Astrocyte of the cerebellum (primary cell): ENCODE measurements at regions of chr3 and their contacts with region 1.

Region 1: DNA sequence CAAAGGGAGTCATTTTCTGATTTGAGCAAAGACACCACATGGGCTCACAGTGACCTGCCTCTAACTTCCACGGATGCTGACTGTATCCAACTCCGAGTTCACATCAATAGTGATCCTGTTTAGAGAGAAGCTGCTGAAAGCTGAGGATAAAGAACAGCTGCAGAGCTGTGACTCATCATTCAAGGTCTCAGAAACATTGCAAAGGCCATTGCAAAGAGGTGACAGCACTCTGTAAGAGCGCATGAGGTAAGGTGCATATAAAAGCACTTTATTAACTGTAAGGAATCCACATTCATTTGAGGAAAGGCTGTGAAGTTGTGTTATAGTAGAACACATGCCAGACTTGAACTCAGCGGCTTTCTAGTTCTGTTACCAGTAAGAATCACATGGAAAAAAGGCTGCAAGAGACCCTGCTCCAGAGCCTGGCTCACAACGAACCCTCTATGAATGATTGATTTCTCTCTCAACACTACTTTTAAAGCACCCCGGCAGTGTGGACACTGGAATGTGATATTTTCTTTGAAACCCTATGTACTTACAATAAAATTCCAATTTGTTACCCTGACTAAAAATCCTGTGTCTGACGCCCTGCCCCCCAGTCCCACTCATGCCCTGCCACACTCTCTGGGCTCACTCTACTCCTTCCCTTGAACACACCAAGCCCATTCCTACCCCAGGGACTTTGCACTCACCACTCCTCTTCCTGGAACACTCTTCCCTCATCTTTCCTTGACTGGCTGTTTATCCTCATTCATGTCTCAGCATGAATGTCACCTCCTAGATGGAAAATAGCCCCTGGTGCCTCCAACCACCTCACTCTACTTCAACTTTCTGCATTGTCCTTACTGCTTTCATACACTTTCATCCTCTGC is 111.2 kb downstream of the LSM3 start:
- DNase-seq: peak; percentile 16
- H3K4me3 ChIP-seq: no peak overlapping the region
- CTCF ChIP-seq: no peak

Region 2: GRCh38 chr3:14461748-14462324 is 172.0 kb after region 1 on chr3:
- in situ Hi-C with region 1: loop called (anchors 25 kb)
- DNase-seq: peak; percentile 40
- H3K4me3 ChIP-seq: no peak overlapping the region
- CTCF ChIP-seq: peak; percentile 86